Activated naive CD8-positive, alpha-beta T cell treated with anti-CD3 and anti-CD28 coated beads, Interleukin-2, amount 10 ng/mL, durations not matched to agents 7 days and 5 days (primary cell): ENCODE measurements at regions of chr15 and their contacts with region 1.

Region 1: GRCh38 chr15:42575188-42576039 is at the start of gene STARD9:
- DNase-seq: peak; percentile 97
- ATAC-seq: peak; percentile 92
- H3K4me3 Mint-ChIP-seq: peak within 1 kb of the TSS; percentile 92
- H3K27ac Mint-ChIP-seq: peak within 1 kb of the TSS; percentile 88
- H3K4me1 Mint-ChIP-seq: peaks cover 29% of the 10 kb centered on the region
- H3K27me3 Mint-ChIP-seq: peaks cover 7% of the 10 kb centered on the region
- total RNA-seq, gene STARD9: 14.0 to 16.1 TPM

Region 2: GRCh38 chr15:42313463-42313862 is 262.0 kb before region 1 on chr15:
- POLR2A ChIA-PET with region 1: no interaction called
- DNase-seq: no peak
- ATAC-seq: no peak
- H3K4me3 Mint-ChIP-seq: no peak overlapping the region
- H3K27ac Mint-ChIP-seq: no peak overlapping the region
- H3K4me1 Mint-ChIP-seq: no peaks in the 10 kb centered on the region
- H3K27me3 Mint-ChIP-seq: no peaks in the 10 kb centered on the region

Region 3: DNA sequence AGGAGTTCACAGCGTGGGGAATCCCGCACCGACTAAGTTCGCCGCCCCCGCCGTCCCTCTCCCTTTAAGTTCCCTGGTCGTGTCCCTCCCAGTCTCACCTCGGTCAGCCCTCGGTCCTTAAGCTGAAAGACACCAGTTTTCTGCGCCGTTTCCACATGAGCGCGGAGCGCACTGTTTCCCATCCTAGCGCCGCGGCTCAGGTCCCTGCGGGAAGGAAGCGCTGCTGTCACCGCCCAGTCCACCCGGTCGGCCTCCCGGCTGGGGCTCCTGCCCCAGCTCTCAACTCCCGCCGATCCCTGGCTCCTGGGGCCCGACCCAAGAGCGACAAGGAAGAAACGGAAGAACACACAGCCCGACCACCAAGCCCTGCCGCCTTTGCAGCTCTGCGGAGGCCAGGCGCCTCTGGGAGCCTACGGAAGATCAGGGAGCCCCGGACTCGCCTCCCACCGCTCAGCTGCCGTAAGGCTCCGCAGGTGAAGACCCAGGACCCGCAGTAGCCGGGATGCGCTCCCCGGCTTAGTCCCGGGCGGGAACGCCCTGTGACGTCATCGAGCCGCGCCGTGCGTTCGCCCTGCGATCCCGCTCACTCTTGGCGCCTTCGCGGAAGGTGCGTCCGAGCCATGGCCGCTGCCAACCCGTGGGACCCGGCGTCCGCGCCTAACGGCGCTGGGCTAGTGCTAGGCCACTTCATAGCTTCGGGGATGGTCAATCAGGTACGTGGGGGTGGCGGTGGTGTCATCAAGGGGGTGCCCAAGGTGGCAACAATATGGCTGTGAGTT is 27.0 kb before region 1 on chr15 and contains the starts of genes HAUS2 and LRRC57:
- POLR2A ChIA-PET with region 1: interaction called, 13 read pairs
- DNase-seq: peak; percentile 93
- ATAC-seq: peak; percentile 91
- H3K4me3 Mint-ChIP-seq: peak within 1 kb of the TSS; percentile 98
- H3K27ac Mint-ChIP-seq: peak within 1 kb of the TSS; percentile 99
- H3K4me1 Mint-ChIP-seq: peaks cover 38% of the 10 kb centered on the region
- H3K27me3 Mint-ChIP-seq: no peaks in the 10 kb centered on the region
- total RNA-seq, gene HAUS2: 28.7 to 30.2 TPM
- total RNA-seq, gene LRRC57: 24.5 to 25.8 TPM

Region 4: GRCh38 chr15:42591238-42591934 is 16.0 kb after region 1 on chr15:
- POLR2A ChIA-PET with region 1: interaction called, 10 read pairs
- DNase-seq: no peak
- ATAC-seq: no peak
- H3K4me3 Mint-ChIP-seq: no peak overlapping the region
- H3K27ac Mint-ChIP-seq: no peak overlapping the region
- H3K4me1 Mint-ChIP-seq: no peaks in the 10 kb centered on the region
- H3K27me3 Mint-ChIP-seq: no peaks in the 10 kb centered on the region

Region 5: GRCh38 chr15:42608110-42608531 is 32.7 kb after region 1 on chr15:
- POLR2A ChIA-PET with region 1: interaction called, 22 read pairs
- DNase-seq: peak; percentile 69
- ATAC-seq: peak; percentile 68
- H3K4me3 Mint-ChIP-seq: peak overlapping the region; percentile 74
- H3K27ac Mint-ChIP-seq: peak overlapping the region; percentile 87
- H3K4me1 Mint-ChIP-seq: peaks cover 48% of the 10 kb centered on the region
- H3K27me3 Mint-ChIP-seq: no peaks in the 10 kb centered on the region

Region 6: DNA sequence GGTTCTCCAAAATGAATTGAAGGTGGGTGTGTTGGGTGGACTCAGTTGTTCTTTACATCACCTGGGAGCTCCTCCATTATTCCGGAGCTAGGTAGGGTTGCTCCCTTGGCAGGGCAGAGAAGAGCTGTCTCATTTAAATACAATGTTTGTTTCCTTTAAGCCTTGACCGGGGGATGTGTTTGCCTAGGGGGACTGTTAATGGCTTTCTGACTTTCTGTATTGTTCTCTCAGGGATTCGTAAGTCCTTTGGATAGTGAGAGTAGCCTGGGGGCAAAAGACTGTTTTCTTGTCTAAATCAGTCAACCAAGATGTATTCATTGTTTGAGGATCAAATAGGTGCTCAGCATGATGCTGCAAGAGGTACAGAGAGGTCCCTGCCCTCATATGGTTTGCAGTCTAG is 90.4 kb after region 1 on chr15:
- POLR2A ChIA-PET with region 1: no interaction called
- DNase-seq: no peak
- ATAC-seq: no peak
- H3K4me3 Mint-ChIP-seq: no peak overlapping the region
- H3K27ac Mint-ChIP-seq: no peak overlapping the region
- H3K4me1 Mint-ChIP-seq: no peaks in the 10 kb centered on the region
- H3K27me3 Mint-ChIP-seq: no peaks in the 10 kb centered on the region

Region 7: GRCh38 chr15:42846647-42847046 is 271.2 kb after region 1 on chr15:
- POLR2A ChIA-PET with region 1: no interaction called
- DNase-seq: no peak
- ATAC-seq: no peak
- H3K4me3 Mint-ChIP-seq: no peak overlapping the region
- H3K27ac Mint-ChIP-seq: no peak overlapping the region
- H3K4me1 Mint-ChIP-seq: peaks cover 4% of the 10 kb centered on the region
- H3K27me3 Mint-ChIP-seq: no peaks in the 10 kb centered on the region